Tibial artery (tissue), 4 donors: ENCODE measurements at regions of chr12 and their contacts with region 1.

Region 1: DNA sequence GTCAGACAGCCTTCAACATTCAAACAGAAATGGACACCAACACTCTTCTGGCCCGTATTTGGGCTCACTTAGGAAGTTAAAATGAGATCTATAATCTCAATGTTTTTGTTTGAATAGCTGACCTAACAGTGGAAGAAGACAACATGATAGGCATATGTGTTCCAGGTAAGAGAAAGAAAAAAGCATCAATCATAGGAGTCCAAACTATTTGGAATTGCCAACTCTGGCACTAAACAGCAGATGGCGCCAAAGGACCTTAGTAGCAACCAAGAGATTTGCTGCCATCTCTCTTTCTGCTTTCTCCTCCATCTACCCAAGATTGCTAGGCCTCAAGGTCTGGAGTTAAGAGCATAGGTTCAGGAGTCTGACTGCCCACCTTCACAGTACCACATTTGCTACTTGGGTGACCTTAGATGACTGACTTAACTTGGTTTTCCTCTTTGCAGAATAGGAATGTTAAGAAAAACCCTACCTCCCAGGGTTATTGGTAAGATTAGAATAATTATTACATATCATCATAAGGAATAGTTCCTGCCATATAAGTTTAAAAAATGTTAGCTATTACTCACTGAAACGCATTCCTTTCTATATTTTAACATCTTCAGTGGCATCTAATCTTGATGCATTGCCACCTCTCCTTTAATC is 30.2 kb downstream of the PEX5 start:
- DNase-seq: peak in 1 of 2 donors; percentile 69
- H3K4me3 ChIP-seq: no peak overlapping the region
- H3K27ac ChIP-seq: no peak overlapping the region
- H3K4me1 ChIP-seq: no peaks in the 10 kb centered on the region
- H3K27me3 ChIP-seq: no peaks in the 10 kb centered on the region
- CTCF ChIP-seq: peak; percentile 73 to 80

Region 2: GRCh38 chr12:7638760-7639555 is 419.2 kb after region 1 on chr12:
- intact Hi-C with region 1: loop called (anchors 2 kb)
- DNase-seq: peak; percentile 77 to 78
- H3K4me3 ChIP-seq: peak overlapping the region; percentile 42 to 44
- H3K27ac ChIP-seq: no peak overlapping the region
- H3K4me1 ChIP-seq: peaks cover 0 to 12% (median 0%) of the 10 kb centered on the region in 4 donors
- H3K27me3 ChIP-seq: peaks cover 0 to 15% of the 10 kb centered on the region in 2 donors
- CTCF ChIP-seq: peak; percentile 77 to 91